ENCODE measurements at regions of chr19 and their contacts with region 1.

Region 1: GRCh38 chr19:11203194-11204075 is 6.1 kb upstream of the KANK2 start:
- DNase-seq: peak; percentile 70 to 95
- H3K4me3 ChIP-seq: peak overlapping the region in 1 of 2 donors; percentile 14
- H3K27ac ChIP-seq: peak overlapping the region; percentile 93 to 94
- H3K4me1 ChIP-seq: peaks cover 10 to 24% of the 10 kb centered on the region in 2 donors
- H3K27me3 ChIP-seq: no peaks in the 10 kb centered on the region
- CTCF ChIP-seq: peak; percentile 91 to 99 (median 94)

Region 2: DNA sequence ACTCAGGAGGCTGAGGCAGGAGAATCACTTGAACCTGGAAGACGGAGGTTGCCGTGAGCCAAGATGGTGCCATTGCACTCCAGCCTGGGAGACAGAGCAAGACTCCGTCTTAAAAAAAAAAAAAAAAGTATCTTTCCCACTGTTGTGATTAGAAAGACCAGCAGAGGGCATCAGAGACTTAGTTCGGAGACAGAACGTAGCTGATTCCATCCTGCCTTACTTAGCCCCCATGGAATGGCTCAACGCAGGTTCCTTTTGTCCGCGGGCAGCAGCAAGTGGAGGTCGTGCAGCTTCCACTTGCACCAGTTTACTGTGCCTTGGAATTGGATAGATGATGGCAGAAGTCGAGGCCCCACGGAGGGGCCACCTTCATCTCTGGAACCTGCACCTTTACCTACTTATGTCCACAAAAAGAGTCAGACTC is 266.8 kb before region 1 on chr19:
- intact Hi-C with region 1: loop called (anchors 10 kb)
- DNase-seq: no peak
- H3K4me3 ChIP-seq: peak overlapping the region in 1 of 2 donors; percentile 33
- H3K27ac ChIP-seq: no peak overlapping the region
- H3K4me1 ChIP-seq: no peaks in the 10 kb centered on the region
- H3K27me3 ChIP-seq: no peaks in the 10 kb centered on the region
- CTCF ChIP-seq: peak; percentile 59 to 73 (median 66)

Region 3: DNA sequence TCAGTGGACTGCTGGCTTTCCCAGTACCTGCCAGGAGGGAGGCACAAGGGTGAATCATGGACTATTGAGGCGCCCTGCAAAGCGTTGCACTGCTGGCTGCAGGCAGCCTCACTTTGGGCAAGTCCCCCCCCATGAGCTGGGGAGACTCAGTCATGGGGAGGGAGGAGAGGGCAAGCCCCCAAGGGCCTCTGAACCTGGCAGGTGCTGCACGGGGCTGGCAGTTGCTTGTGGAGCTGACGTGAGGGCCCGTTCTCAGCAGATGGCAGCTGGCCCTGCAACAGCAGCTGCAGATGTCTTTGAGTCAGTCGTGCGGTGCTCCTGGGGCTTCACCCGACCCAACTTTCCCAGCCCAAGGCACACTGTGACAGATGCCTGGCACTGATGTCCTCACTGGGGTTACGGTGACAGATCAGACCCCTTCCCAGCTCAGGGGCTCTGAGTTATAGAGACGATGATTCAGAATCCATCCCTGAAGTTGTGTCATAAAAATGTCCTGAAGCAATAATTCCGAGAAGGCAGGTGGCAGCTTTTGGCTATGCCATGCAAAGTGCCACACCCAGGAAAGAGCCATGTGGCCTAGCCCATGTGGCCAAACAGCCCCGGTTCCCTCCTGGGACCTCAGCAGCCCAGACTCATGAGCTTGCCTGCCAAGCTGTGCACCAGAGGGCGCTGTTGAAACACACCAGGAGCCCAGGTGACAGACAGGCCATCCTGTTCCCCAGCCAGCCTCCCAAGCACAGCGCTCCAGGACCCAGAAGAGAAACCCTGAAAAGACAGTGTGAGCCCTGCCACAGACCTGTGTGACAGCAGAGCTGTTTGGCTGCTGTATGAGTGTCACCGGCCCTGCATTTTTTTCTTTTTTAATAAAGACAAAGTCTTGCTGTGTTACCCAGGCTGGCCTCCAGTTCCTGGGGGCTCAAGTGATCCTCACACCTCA is 167.7 kb before region 1 on chr19:
- intact Hi-C with region 1: loop called (anchors 1 kb)
- DNase-seq: peak; percentile 70 to 96
- H3K4me3 ChIP-seq: no peak overlapping the region
- H3K27ac ChIP-seq: peak overlapping the region; percentile 2 to 54
- H3K4me1 ChIP-seq: peaks cover 4 to 5% of the 10 kb centered on the region in 2 donors
- H3K27me3 ChIP-seq: no peaks in the 10 kb centered on the region
- CTCF ChIP-seq: peak; percentile 81 to 94 (median 92)

Region 4: DNA sequence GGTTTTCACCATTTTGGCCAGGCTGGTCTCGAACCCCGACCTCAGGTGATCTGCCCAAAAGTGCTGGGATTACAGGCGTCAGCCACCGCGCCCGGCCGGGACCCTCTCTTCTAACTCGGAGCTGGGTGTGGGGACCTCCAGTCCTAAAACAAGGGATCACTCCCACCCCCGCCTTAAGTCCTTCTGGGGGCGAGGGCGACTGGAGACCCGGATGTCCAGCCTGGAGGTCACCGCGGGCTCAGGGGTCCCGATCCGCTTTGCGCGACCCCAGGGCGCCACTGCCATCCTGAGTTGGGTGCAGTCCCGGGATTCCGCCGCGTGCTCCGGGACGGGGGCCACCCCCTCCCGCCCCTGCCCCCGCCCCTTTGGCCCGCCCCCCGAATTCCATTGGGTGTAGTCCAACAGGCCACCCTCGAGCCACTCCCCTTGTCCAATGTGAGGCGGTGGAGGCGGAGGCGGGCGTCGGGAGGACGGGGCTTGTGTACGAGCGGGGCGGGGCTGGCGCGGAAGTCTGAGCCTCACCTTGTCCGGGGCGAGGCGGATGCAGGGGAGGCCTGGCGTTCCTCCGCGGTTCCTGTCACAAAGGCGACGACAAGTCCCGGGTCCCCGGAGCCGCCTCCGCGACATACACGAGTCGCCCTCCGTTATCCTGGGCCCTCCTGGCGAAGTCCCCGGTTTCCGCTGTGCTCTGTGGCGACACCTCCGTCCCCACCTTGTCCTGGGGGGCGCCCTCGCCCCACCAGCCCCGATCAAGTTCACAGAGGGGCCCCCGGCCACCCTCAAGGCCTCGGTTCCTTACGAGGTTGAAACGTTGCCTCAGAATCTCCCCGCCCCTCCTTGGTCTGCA is 113.2 kb before region 1 on chr19:
- intact Hi-C with region 1: loop called (anchors 2 kb)
- DNase-seq: peak; percentile 96 to 99
- H3K4me3 ChIP-seq: peak overlapping the region; percentile 45 to 82
- H3K27ac ChIP-seq: peak overlapping the region; percentile 98 to 99
- H3K4me1 ChIP-seq: peaks cover 15 to 45% of the 10 kb centered on the region in 2 donors
- H3K27me3 ChIP-seq: no peaks in the 10 kb centered on the region
- CTCF ChIP-seq: peak in 2 of 3 experiments; percentile 16

Region 5: DNA sequence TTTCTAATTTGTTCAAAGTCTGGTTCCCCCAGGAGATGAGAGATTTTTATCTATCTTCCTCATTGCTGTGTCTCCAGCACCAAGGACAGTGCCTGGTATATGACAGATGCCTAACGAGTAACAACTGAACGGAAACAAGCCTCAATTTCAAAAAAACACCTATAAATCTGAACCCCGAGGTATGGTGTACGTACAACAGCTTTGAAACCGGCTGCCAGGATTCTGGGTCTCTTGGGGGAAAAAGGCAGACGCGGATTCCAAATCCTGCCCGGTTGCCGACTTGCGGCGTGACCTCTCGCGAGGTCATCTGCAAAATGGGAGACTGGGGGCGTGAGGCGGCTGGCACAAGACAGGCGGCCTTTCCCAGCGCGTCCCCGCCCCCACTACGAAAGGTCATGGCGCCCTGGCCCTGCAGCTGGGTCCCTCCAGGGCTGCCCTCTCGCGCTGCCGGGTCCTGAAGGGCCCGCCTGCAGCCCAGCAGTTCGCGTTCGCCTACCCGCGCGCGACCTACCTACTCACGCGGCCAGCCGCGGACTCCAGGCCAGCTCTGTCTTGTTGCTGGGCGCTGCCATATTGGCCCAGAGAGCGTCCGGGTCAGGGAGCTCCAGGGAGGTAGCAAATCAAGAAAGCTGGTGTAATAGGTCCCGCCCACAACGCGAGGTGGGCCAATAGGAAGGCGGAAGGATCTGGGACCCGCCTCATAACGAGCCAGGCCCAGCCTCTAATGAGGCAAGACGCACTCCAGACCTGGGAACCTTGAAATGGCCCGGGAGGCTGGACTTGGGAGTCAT is 325.3 kb after region 1 on chr19 and contains the start of gene ECSIT:
- intact Hi-C with region 1: no loop called
- DNase-seq: peak; percentile 94 to 100
- H3K4me3 ChIP-seq: peak within 1 kb of the TSS; percentile 57 to 73
- H3K27ac ChIP-seq: peak within 1 kb of the TSS; percentile 92 to 94
- H3K4me1 ChIP-seq: peaks cover 6 to 12% of the 10 kb centered on the region in 2 donors
- H3K27me3 ChIP-seq: no peaks in the 10 kb centered on the region
- CTCF ChIP-seq: peak in 1 of 3 experiments; percentile 16
- total RNA-seq, gene ECSIT: 27.5 TPM

Measured in ascending aorta (tissue), 2 donors.